ENCODE measurements at regions of chr5 and their contacts with region 1.

Region 1: DNA sequence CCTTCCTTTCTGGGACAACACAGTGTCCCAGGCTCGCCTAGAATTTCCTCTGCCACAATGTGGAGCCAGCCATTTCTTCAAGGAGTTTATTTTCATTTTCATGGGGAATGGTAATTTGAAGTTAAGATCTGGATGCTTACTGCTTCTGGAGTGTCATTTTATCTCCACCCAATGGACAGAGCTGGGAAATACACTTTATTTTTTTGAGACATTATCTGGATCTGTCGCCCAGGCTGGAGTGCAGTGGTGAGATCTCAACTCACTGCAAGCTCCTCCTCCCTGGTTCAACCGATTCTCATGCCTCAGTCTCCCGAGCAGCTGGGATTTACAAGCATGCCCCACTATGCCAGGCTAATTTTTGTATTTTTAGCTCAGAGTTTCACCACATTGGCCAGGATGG is 12.7 kb upstream of the THG1L start:
- DNase-seq: no peak
- ATAC-seq: peak; percentile 95
- H3K4me3 Mint-ChIP-seq: no peak overlapping the region
- H3K27ac Mint-ChIP-seq: peak overlapping the region; percentile 41
- H3K4me1 Mint-ChIP-seq: peaks cover 18% of the 10 kb centered on the region
- H3K27me3 Mint-ChIP-seq: no peaks in the 10 kb centered on the region
- CTCF ChIP-seq: no peak

Region 2: GRCh38 chr5:156879665-156880285 is 838.7 kb before region 1 on chr5:
- CTCF ChIA-PET with region 1: no interaction called
- POLR2A ChIA-PET with region 1: no interaction called
- intact Hi-C with region 1: no loop called
- DNase-seq: no peak
- ATAC-seq: no peak
- H3K4me3 Mint-ChIP-seq: no peak overlapping the region
- H3K27ac Mint-ChIP-seq: no peak overlapping the region
- H3K4me1 Mint-ChIP-seq: peaks cover 6% of the 10 kb centered on the region
- H3K27me3 Mint-ChIP-seq: peaks cover 3% of the 10 kb centered on the region
- CTCF ChIP-seq: no peak

Region 3: GRCh38 chr5:157328277-157328912 is 390.1 kb before region 1 on chr5:
- CTCF ChIA-PET with region 1: interaction called, 14 read pairs
- POLR2A ChIA-PET with region 1: interaction called, 4 read pairs
- intact Hi-C with region 1: loop called (anchors 1 kb)
- DNase-seq: no peak
- ATAC-seq: peak; percentile 100
- H3K4me3 Mint-ChIP-seq: no peak overlapping the region
- H3K27ac Mint-ChIP-seq: peak overlapping the region; percentile 36
- H3K4me1 Mint-ChIP-seq: peaks cover 6% of the 10 kb centered on the region
- H3K27me3 Mint-ChIP-seq: no peaks in the 10 kb centered on the region
- CTCF ChIP-seq: peak; percentile 59

Region 4: GRCh38 chr5:157431544-157432200 is 286.8 kb before region 1 on chr5:
- CTCF ChIA-PET with region 1: interaction called, 46 read pairs
- POLR2A ChIA-PET with region 1: interaction called, 5 read pairs
- intact Hi-C with region 1: loop called (anchors 1 kb)
- DNase-seq: no peak
- ATAC-seq: peak; percentile 100
- H3K4me3 Mint-ChIP-seq: peak overlapping the region; percentile 0
- H3K27ac Mint-ChIP-seq: peak overlapping the region; percentile 81
- H3K4me1 Mint-ChIP-seq: peaks cover 18% of the 10 kb centered on the region
- H3K27me3 Mint-ChIP-seq: no peaks in the 10 kb centered on the region
- CTCF ChIP-seq: no peak

Region 5: GRCh38 chr5:157476702-157477408 is 241.7 kb before region 1 on chr5:
- CTCF ChIA-PET with region 1: interaction called, 19 read pairs
- POLR2A ChIA-PET with region 1: no interaction called
- intact Hi-C with region 1: loop called (anchors 1 kb)
- DNase-seq: no peak
- ATAC-seq: no peak
- H3K4me3 Mint-ChIP-seq: no peak overlapping the region
- H3K27ac Mint-ChIP-seq: peak overlapping the region; percentile 68
- H3K4me1 Mint-ChIP-seq: peaks cover 76% of the 10 kb centered on the region
- H3K27me3 Mint-ChIP-seq: no peaks in the 10 kb centered on the region
- CTCF ChIP-seq: no peak

Region 6: GRCh38 chr5:157651623-157652549 is 66.6 kb before region 1 on chr5 and contains the start of gene SOX30:
- CTCF ChIA-PET with region 1: interaction called, 10 read pairs
- POLR2A ChIA-PET with region 1: no interaction called
- intact Hi-C with region 1: loop called (anchors 5 kb)
- DNase-seq: peak; percentile 77
- ATAC-seq: peak; percentile 97
- H3K4me3 Mint-ChIP-seq: peak within 1 kb of the TSS; percentile 84
- H3K27ac Mint-ChIP-seq: peak within 1 kb of the TSS; percentile 86
- H3K4me1 Mint-ChIP-seq: peaks cover 50% of the 10 kb centered on the region
- H3K27me3 Mint-ChIP-seq: no peaks in the 10 kb centered on the region
- CTCF ChIP-seq: no peak
- total RNA-seq, gene SOX30: 0.37 and 0.47 TPM in 2 replicates

Region 7: DNA sequence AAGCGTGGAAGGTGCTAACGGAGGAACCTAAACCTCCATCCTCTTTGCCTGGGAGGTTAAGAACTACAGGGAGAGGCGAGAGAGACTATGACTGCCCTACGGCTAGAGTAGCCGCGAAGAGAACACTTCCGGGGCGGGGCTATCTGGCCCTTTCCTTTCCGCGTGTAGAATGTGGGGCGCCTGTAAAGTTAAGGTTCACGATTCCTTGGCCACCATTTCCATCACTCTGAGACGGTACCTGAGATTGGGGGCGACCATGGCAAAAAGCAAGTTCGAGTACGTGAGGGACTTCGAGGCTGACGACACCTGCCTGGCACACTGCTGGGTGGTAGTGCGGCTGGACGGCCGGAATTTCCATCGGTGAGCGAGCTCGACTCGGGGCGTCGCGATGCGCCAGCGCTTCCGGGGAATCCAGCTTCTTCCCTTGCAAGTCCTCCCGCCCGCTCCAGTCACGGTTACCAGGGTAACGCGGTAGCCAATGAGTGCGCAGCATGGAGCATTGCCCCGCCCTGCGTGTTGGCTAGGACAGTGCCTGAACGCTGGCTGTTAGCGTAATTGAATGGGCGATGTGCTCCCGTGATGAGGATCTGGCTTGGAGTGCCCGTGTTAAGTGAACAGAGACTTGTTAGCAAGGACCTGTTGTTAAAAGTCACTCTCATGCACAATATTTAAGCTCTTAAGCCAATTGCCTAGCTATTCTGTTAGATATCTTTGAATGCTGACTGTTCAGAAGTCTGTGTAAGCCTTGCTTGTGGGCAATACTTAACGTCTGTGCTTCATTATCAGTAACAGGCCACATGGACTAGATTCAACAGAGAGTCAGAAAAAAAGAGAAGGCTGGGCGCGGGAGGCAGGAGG is 13.0 kb after region 1 on chr5 and contains the start of gene THG1L:
- CTCF ChIA-PET with region 1: interaction called, 7 read pairs
- POLR2A ChIA-PET with region 1: interaction called, 13 read pairs
- intact Hi-C with region 1: loop called (anchors 1 kb)
- DNase-seq: peak; percentile 93
- ATAC-seq: peak; percentile 84
- H3K4me3 Mint-ChIP-seq: peak within 1 kb of the TSS; percentile 98
- H3K27ac Mint-ChIP-seq: peak within 1 kb of the TSS; percentile 99
- H3K4me1 Mint-ChIP-seq: peaks cover 46% of the 10 kb centered on the region
- H3K27me3 Mint-ChIP-seq: no peaks in the 10 kb centered on the region
- CTCF ChIP-seq: no peak
- total RNA-seq, gene THG1L: 25.6 and 28.9 TPM in 2 replicates

Measured in activated B cell treated with CpG ODN at 0.5 μM for 24 hours (primary cell).